ENCODE measurements at regions of chr21 and their contacts with region 1.

Region 1: DNA sequence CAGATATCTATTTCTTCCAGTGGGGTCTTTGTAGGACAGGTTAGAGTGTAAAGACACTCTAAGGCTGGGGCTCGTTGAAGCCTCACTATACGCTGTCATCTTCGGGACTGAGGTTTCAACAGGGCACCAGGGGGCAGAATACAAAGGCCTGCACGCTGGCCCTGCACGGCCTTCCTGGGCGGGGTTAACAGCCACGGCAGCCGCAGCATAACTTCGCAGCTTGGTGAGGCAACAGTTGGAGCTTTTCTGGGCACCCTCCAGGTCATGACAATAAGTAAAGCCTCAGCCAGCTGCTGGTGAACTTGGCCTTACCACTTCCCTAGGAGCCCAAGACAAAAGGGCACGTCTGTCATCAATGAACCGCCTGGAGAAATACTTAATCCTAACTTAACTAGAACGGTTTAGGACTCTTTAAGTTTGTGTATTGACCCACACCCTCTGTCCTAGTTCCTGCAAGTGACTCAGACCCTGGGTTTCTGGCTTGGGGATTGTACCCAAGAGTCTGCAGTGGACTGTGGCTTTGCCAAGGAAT is 2.3 kb upstream of the RUNX1 start:
- DNase-seq: peak; percentile 72
- H3K4me3 ChIP-seq: no peak overlapping the region
- H3K27ac ChIP-seq: no peak overlapping the region
- H3K4me1 ChIP-seq: peaks cover 43% of the 10 kb centered on the region
- H3K27me3 ChIP-seq: no peaks in the 10 kb centered on the region
- CTCF ChIP-seq: peak; percentile 71 to 74
- POLR2A ChIP-seq: no peak

Region 2: GRCh38 chr21:34807146-34807880 is 244.0 kb before region 1 on chr21:
- CTCF ChIA-PET with region 1: no interaction called
- POLR2A ChIA-PET with region 1: no interaction called
- dilution Hi-C with region 1: no loop called
- intact Hi-C with region 1: loop called (anchors 5 kb)
- DNase-seq: peak; percentile 94
- H3K4me3 ChIP-seq: no peak overlapping the region
- H3K27ac ChIP-seq: peak overlapping the region; percentile 100
- H3K4me1 ChIP-seq: peaks cover 37% of the 10 kb centered on the region
- H3K27me3 ChIP-seq: no peaks in the 10 kb centered on the region
- CTCF ChIP-seq: no peak
- POLR2A ChIP-seq: no peak

Region 3: GRCh38 chr21:35084869-35085268 is 33.5 kb after region 1 on chr21:
- CTCF ChIA-PET with region 1: interaction called, 4 read pairs
- POLR2A ChIA-PET with region 1: no interaction called
- dilution Hi-C with region 1: no loop called
- intact Hi-C with region 1: loop called (anchors 2 kb)
- DNase-seq: peak; percentile 73
- H3K4me3 ChIP-seq: no peak overlapping the region
- H3K27ac ChIP-seq: peak overlapping the region; percentile 77
- H3K4me1 ChIP-seq: peaks cover 25% of the 10 kb centered on the region
- H3K27me3 ChIP-seq: no peaks in the 10 kb centered on the region
- CTCF ChIP-seq: no peak
- POLR2A ChIP-seq: no peak

Region 4: DNA sequence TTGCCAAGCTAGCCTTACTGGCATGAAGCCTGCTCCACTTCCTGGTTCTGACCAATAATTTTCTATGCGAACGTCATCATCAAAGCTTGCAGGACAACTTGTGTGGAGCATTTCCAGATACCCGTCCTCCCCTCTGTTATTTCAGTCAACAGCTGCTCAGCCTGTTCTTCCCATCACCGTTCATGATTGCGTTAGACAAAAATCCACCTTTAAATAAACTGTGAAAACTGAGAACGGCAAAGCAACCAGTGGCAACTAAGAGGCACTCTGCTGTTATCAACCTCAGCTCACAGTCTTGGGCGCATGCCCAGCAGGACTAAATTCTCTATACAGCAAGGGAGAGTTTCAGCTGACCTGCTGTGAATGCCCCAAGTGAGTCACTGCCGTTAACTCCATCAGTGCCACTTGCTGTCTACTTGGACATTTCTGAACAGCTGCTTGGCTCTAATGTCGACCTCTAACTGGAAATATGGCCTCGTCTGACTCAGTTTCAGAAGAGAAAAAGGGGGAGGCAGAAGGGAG is 205.2 kb after region 1 on chr21:
- CTCF ChIA-PET with region 1: interaction called, 8 read pairs
- POLR2A ChIA-PET with region 1: no interaction called
- dilution Hi-C with region 1: no loop called
- intact Hi-C with region 1: loop called (anchors 1 kb)
- DNase-seq: peak; percentile 98
- H3K4me3 ChIP-seq: peak overlapping the region in 2 of 3 experiments; percentile 20 to 47
- H3K27ac ChIP-seq: peak overlapping the region; percentile 78
- H3K4me1 ChIP-seq: peaks cover 15% of the 10 kb centered on the region
- H3K27me3 ChIP-seq: no peaks in the 10 kb centered on the region
- CTCF ChIP-seq: no peak
- POLR2A ChIP-seq: no peak

Region 5: GRCh38 chr21:35616090-35616489 is 564.7 kb after region 1 on chr21:
- CTCF ChIA-PET with region 1: interaction called, 10 read pairs
- POLR2A ChIA-PET with region 1: no interaction called
- dilution Hi-C with region 1: no loop called
- intact Hi-C with region 1: no loop called
- DNase-seq: peak; percentile 58
- H3K4me3 ChIP-seq: no peak overlapping the region
- H3K27ac ChIP-seq: no peak overlapping the region
- H3K4me1 ChIP-seq: peaks cover 13% of the 10 kb centered on the region
- H3K27me3 ChIP-seq: no peaks in the 10 kb centered on the region
- CTCF ChIP-seq: peak; percentile 6 to 25
- POLR2A ChIP-seq: no peak

Region 6: DNA sequence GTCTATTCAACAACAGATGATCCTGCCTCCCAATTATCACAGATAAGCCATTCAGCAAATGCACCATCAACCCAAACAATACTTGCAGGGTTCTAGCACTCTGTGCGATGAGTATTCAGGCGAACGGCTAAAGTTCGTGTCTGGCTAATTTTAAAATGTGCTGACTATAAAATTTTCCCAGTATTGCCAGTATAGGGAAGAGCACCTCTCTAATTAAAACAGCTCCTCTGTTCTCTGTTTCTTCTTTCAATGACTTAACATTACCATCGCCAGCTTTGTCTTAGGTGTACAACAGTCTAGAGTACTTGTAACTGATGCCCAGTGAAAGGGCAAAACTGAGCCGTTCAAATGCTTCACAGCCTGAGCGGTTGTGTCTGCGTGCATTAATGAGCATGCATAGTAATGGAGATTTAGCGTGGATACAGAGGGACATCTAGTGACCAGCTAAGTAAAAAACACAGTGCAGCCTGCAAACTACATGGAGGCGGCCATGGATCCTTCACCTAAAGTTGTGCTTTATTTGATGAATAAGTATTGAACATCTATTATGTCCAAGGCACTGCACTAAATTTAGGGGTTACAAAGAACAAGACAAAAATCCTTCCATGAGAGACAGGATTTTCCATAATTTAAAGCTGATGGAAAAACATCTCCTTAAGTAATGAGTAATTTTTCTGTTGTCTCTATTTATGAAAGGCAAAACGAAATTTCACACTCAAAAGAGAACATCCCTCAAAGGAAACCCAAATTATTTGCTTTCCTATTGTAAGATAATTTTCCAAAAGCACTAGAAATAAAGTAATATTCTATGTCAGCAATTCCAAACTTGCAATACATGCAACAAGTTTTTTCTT is 888.9 kb after region 1 on chr21:
- CTCF ChIA-PET with region 1: no interaction called
- POLR2A ChIA-PET with region 1: no interaction called
- dilution Hi-C with region 1: no loop called
- intact Hi-C with region 1: loop called (anchors 1 kb)
- DNase-seq: peak; percentile 76
- H3K4me3 ChIP-seq: no peak overlapping the region
- H3K27ac ChIP-seq: no peak overlapping the region
- H3K4me1 ChIP-seq: no peaks in the 10 kb centered on the region
- H3K27me3 ChIP-seq: no peaks in the 10 kb centered on the region
- CTCF ChIP-seq: peak; percentile 57 to 64
- POLR2A ChIP-seq: no peak

Measured in endothelial cell of umbilical vein (primary cell).